Sigmoid colon (tissue), 7 donors: ENCODE measurements at regions of chr16 and their contacts with region 1.

Region 1: GRCh38 chr16:73956587-73957494 is 339.8 kb upstream of the PSMD7 start:
- DNase-seq: peak; percentile 73
- H3K4me3 ChIP-seq: peak overlapping the region in 2 of 4 donors; percentile 13 to 15
- H3K27ac ChIP-seq: no peak overlapping the region
- H3K4me1 ChIP-seq: peaks cover 0 to 11% (median 4%) of the 10 kb centered on the region in 4 donors
- H3K27me3 ChIP-seq: peaks cover 0 to under 1% (median 0%) of the 10 kb centered on the region in 3 donors
- CTCF ChIP-seq: peak in 3 of 4 experiments; percentile 61 to 83 (median 65)
- EP300 ChIP-seq: no peak
- POLR2A ChIP-seq: no peak

Region 2: DNA sequence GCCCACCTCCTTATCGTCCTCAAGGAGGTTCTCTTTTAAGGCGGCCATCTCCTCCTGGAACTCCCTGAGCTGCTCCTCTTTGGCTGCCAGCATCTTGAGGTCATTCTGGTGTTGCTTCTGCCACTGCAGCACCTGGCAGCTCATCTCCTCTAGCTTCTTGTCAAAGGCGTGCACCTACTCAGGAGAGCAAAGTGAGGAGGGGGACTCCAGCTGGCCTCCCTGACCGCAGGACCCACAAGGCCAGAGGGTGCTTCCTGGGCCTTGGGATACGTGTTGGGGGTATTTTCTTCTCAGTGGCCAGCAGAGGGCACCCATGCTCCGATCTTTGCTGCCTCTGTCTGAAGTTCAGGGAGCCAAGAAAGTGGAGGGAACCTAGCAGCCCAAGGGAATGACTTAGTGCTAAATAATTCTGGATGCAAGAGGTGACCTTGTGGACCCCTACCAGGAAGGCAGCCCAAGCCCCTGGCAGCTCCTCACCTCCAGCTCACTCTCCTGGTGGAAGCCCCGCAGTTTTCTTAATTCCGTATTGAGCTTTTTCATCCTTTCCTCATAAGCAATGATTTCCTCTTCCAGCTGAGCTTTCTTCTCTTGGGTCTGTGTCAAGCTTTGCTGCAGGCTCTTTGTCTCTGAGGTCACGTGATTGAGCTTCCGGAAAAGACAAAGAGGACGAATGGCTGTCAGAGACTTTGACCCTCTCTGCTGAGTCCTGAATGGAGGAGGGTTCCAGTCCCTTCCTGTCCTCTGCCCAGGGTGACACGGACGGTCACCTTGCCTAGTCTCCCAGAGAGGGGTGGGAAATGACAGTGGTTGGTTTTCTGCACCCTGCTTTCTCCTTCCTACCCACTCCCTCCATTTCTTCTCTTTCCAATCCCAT is 1831.8 kb before region 1 on chr16:
- intact Hi-C with region 1: loop called (anchors 5 kb)
- DNase-seq: peak; percentile 81
- H3K4me3 ChIP-seq: no peak overlapping the region
- H3K27ac ChIP-seq: peak overlapping the region in 2 of 4 donors; percentile 8 to 42
- H3K4me1 ChIP-seq: no peaks in the 10 kb centered on the region
- H3K27me3 ChIP-seq: no peaks in the 10 kb centered on the region
- CTCF ChIP-seq: peak; percentile 47 to 65 (median 57)
- EP300 ChIP-seq: no peak
- POLR2A ChIP-seq: no peak

Region 3: GRCh38 chr16:73616166-73616753 is 340.6 kb before region 1 on chr16:
- intact Hi-C with region 1: no loop called
- DNase-seq: no peak
- H3K4me3 ChIP-seq: no peak overlapping the region
- H3K27ac ChIP-seq: no peak overlapping the region
- H3K4me1 ChIP-seq: no peaks in the 10 kb centered on the region
- H3K27me3 ChIP-seq: no peaks in the 10 kb centered on the region
- CTCF ChIP-seq: no peak
- EP300 ChIP-seq: no peak
- POLR2A ChIP-seq: no peak

Region 4: DNA sequence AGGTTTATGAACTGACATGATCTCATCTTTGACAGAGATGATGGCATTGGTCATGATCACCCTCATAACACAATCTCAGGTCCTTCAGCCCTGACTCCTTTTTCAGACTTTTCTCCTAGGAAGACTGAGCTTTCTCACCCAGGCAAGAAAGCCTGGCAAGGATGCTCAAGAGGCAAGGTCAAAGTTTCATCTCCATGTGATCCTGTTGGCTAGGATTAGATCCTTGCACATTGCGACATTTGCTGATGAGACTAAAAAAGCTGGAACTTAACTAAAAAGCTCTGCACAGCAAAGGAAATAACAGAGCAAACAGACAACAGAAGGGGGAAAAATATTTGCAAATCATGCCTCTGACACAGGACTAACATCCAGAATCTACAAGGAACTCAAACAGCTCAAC is 104.3 kb before region 1 on chr16:
- intact Hi-C with region 1: no loop called
- DNase-seq: no peak
- H3K4me3 ChIP-seq: no peak overlapping the region
- H3K27ac ChIP-seq: no peak overlapping the region
- H3K4me1 ChIP-seq: no peaks in the 10 kb centered on the region
- H3K27me3 ChIP-seq: no peaks in the 10 kb centered on the region
- CTCF ChIP-seq: no peak
- EP300 ChIP-seq: no peak
- POLR2A ChIP-seq: no peak

Region 5: GRCh38 chr16:74015953-74016352 is 59.1 kb after region 1 on chr16:
- intact Hi-C with region 1: no loop called
- DNase-seq: no peak
- H3K4me3 ChIP-seq: no peak overlapping the region
- H3K27ac ChIP-seq: no peak overlapping the region
- H3K4me1 ChIP-seq: no peaks in the 10 kb centered on the region
- H3K27me3 ChIP-seq: no peaks in the 10 kb centered on the region
- CTCF ChIP-seq: no peak
- EP300 ChIP-seq: no peak
- POLR2A ChIP-seq: no peak